Activated CD8-positive, alpha-beta T cell treated with anti-CD3 and anti-CD28 coated beads, Interleukin-2, amount 10 ng/mL, durations not matched to agents 7 days and 5 days (primary cell): ENCODE measurements at regions of chr17 and their contacts with region 1.

Region 1: GRCh38 chr17:1365445-1366039 is 34.5 kb downstream of the YWHAE start:
- DNase-seq: peak; percentile 78
- ATAC-seq: peak; percentile 59
- H3K4me3 Mint-ChIP-seq: no peak overlapping the region
- H3K27ac Mint-ChIP-seq: no peak overlapping the region
- H3K4me1 Mint-ChIP-seq: peaks cover 60% of the 10 kb centered on the region
- H3K27me3 Mint-ChIP-seq: no peaks in the 10 kb centered on the region

Region 2: DNA sequence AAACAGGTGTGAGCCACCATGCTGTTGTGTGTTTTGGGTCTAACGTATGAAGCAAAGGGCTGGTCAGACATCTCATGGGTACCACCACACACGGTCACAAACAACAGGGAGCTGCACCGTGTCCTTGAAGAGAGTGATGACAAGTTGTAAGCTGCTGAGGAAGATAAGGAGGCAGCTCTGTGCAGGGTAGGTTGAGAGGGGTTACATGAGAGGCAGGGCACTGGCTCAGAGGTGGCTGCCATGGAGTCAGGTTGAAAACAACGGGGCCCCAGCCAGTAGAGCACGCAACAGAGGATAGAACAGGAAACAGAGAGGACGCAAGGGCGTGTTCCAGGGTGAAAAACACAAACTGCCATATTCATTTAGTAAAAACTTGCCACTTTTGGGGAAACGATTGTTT is 33.8 kb before region 1 on chr17:
- CTCF ChIA-PET with region 1: interaction called, 14 read pairs
- POLR2A ChIA-PET with region 1: no interaction called
- DNase-seq: peak; percentile 47
- ATAC-seq: peak; percentile 73
- H3K4me3 Mint-ChIP-seq: no peak overlapping the region
- H3K27ac Mint-ChIP-seq: peak overlapping the region; percentile 50
- H3K4me1 Mint-ChIP-seq: peaks cover 10% of the 10 kb centered on the region
- H3K27me3 Mint-ChIP-seq: peaks cover 5% of the 10 kb centered on the region

Region 3: DNA sequence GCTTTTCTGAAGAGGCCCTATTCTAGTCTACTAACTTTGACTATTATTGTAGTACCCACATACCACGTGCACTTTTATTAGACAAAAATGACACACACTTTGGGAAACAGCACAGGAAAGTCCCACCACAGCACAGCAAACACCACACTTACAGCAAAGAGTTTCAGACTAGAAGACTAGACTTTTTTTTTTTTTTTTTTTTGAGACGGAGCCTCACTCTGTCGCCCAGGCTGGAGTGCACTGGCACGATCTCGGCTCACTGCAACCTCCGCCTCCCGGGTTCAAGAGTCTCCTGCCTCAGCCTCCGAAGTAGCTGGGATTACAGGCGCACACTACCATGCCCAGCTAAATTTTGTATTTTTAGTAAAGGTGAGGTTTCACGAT is 14.4 kb after region 1 on chr17:
- CTCF ChIA-PET with region 1: interaction called, 88 read pairs
- POLR2A ChIA-PET with region 1: interaction called, 3 read pairs
- DNase-seq: no peak
- ATAC-seq: peak; percentile 12
- H3K4me3 Mint-ChIP-seq: no peak overlapping the region
- H3K27ac Mint-ChIP-seq: peak overlapping the region; percentile 26
- H3K4me1 Mint-ChIP-seq: peaks cover 67% of the 10 kb centered on the region
- H3K27me3 Mint-ChIP-seq: no peaks in the 10 kb centered on the region

Region 4: DNA sequence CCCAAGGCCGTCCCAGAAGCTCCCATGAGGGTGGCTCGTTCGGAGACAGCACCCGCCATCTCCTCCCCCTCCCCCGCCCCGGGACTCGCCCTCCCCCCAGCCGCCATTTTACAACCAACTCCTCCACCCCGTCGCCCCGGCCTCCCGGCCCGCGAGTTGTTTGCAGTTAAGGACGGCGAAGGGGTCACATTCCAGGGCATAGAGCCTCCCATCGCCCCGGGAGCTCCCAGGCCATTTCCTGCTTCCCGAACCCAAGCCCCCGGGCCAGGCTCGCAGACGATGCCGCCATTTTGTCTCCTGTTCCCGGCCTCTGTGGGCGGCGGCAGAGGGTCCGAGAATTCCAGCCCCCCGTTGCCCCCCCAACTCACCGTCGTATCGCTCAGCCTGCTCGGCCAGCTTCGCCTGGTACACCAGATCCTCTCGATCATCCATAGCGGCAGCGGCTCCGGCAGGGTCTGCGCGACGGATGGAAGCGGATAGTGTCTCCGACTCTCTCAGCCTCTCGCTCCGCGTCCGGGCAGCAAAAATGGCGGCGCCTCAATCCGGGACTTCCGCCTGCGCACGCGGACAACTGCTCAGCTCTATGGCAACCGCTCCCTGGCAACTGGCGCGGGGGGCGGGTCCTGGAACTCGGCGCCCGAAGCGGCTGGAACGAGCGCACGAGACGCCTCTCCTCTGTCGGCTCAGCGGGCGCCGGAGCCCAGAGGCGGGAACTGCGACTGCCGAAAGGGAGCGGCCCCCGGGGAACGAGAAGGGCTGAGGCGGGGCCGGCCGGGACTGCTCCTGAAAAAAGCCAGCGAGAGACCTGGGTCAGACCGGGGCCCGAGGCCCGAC is 34.4 kb after region 1 on chr17 and contains the start of gene YWHAE:
- CTCF ChIA-PET with region 1: interaction called, 34 read pairs
- POLR2A ChIA-PET with region 1: interaction called, 10 read pairs
- DNase-seq: peak; percentile 97
- ATAC-seq: peak; percentile 95
- H3K4me3 Mint-ChIP-seq: peak within 1 kb of the TSS; percentile 94
- H3K27ac Mint-ChIP-seq: peak within 1 kb of the TSS; percentile 96
- H3K4me1 Mint-ChIP-seq: peaks cover 24% of the 10 kb centered on the region
- H3K27me3 Mint-ChIP-seq: no peaks in the 10 kb centered on the region
- total RNA-seq, gene YWHAE: 393 to 414 TPM

Region 5: DNA sequence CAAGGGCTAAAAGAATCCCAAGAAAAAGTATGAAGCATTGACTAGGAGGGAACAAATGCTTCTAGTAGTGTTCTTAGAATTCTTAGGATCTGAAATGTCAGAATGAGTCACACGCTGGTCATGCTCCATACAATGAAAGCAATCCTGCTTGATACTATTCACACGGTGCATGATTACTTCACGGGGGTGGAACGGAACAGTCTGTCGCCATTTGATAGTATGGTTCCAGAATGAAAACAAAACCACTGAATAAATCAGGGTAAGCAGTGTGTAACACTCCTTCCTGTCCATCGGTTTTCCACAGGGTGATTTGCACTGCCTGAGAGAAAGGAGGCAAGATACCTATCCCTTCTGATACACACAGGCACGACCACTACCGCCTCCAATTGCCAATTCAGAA is 57.4 kb after region 1 on chr17:
- CTCF ChIA-PET with region 1: interaction called, 14 read pairs
- POLR2A ChIA-PET with region 1: no interaction called
- DNase-seq: no peak
- ATAC-seq: no peak
- H3K4me3 Mint-ChIP-seq: no peak overlapping the region
- H3K27ac Mint-ChIP-seq: no peak overlapping the region
- H3K4me1 Mint-ChIP-seq: peaks cover 2% of the 10 kb centered on the region
- H3K27me3 Mint-ChIP-seq: no peaks in the 10 kb centered on the region

Region 6: DNA sequence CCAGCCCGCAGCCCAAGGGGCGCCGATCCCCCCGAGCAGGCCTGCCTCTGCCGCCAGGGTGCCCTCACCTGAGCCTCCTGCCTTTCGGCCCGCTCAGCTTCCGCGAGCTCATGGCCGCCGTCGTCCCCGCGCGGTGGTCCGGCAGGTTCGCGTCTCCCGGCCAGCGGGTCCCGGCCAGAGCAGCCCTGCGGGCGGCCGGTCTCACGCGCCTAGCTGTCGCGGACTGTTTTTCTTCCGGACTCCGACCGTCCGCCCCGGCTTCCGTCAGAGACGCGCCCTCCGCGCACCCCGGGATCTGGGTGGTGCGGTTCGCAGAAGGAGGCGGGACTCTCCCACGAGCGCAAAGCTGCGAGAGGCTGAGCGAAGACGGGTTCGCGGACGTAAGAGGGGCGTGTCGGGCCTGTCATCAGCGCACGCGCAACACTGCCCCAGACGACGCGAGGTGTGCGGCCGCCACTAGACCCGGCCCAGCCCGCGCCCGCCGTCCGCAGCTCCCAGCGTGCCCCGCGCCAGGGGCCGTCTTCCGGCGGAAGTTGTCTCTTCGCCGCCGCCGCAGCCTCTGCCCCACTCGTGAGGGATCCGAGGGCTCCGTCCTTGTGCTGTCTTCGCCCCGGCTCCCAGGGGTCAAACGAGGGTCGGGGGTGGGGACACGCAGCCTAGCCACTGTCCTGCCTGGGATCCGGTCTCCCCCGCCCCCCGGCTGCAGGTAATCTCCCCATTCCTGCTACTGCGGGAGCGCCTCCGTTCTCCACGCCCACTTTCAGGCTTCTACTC is 151.0 kb after region 1 on chr17 and contains the start of gene INPP5K:
- CTCF ChIA-PET with region 1: interaction called, 143 read pairs
- POLR2A ChIA-PET with region 1: interaction called, 16 read pairs
- DNase-seq: peak; percentile 99
- ATAC-seq: peak; percentile 93
- H3K4me3 Mint-ChIP-seq: peak within 1 kb of the TSS; percentile 86
- H3K27ac Mint-ChIP-seq: peak within 1 kb of the TSS; percentile 86
- H3K4me1 Mint-ChIP-seq: peaks cover 22% of the 10 kb centered on the region
- H3K27me3 Mint-ChIP-seq: no peaks in the 10 kb centered on the region
- total RNA-seq, gene INPP5K: 37.6 to 39.6 TPM

Region 7: GRCh38 chr17:1628856-1629646 is 263.5 kb after region 1 on chr17:
- CTCF ChIA-PET with region 1: interaction called, 26 read pairs
- POLR2A ChIA-PET with region 1: interaction called, 5 read pairs
- DNase-seq: peak; percentile 94
- ATAC-seq: peak; percentile 85
- H3K4me3 Mint-ChIP-seq: peak overlapping the region; percentile 85
- H3K27ac Mint-ChIP-seq: peak overlapping the region; percentile 78
- H3K4me1 Mint-ChIP-seq: peaks cover 28% of the 10 kb centered on the region
- H3K27me3 Mint-ChIP-seq: peaks cover 22% of the 10 kb centered on the region